ENCODE measurements at regions of chr15 and their contacts with region 1.

Region 1: DNA sequence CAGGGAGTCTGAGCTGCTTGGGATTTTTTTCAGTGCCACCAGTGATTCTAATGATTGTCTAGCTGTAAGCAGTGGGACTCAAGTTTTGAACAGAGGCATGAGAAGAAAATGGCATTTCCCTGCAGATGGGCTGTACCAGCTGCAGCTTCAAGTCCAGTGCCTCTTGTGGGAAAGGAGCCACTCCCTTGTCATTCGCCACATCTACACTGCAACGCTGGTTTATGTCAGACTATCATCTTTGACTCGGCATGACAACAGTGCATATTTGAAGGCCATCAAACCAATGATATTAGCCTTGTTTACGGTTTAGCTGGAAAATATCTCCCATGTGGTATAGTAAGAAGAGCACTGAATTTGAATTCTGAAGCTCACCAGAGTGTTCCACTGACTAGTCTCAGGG is 22.2 kb downstream of the SCG5 start:
- DNase-seq: no peak
- H3K4me3 ChIP-seq: no peak overlapping the region
- H3K27ac ChIP-seq: no peak overlapping the region
- H3K4me1 ChIP-seq: no peaks in the 10 kb centered on the region
- H3K27me3 ChIP-seq: no peaks in the 10 kb centered on the region
- CTCF ChIP-seq: no peak

Region 2: GRCh38 chr15:32781781-32782180 is 118.1 kb after region 1 on chr15:
- CTCF ChIA-PET with region 1: no interaction called
- POLR2A ChIA-PET with region 1: no interaction called
- intact Hi-C with region 1: no loop called
- DNase-seq: no peak
- H3K4me3 ChIP-seq: no peak overlapping the region
- H3K27ac ChIP-seq: no peak overlapping the region
- H3K4me1 ChIP-seq: no peaks in the 10 kb centered on the region
- H3K27me3 ChIP-seq: no peaks in the 10 kb centered on the region
- CTCF ChIP-seq: no peak

Region 3: DNA sequence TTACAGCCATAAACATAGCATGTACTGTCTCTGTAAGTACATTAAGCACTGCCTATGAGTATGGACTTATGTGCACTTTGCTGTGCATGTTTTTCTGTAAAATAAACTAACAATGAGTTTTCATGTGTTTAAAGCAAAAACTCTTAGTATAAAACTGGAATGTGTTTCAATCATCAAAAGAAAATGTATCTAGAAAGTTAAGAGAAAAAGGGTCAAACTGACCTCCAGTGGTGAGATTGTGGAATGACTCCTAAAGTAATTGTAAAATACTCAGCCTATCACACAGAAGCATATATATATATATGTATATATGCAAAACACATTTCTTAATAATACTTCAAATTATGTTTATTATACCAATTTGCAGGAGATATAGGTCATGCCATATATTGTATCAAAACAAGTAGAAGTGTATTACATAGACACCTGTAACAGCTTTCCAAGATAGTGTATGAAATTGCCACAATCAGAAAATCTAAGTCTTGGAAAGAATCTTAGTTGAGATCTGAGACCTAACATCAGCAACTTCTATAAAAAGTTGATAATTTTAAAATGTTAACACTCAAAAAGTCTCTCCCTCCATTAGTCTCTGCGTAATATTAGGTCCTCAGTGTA is 331.2 kb after region 1 on chr15:
- CTCF ChIA-PET with region 1: interaction called, 10 read pairs
- POLR2A ChIA-PET with region 1: no interaction called
- intact Hi-C with region 1: loop called (anchors 2 kb)
- DNase-seq: peak; percentile 36
- H3K4me3 ChIP-seq: no peak overlapping the region
- H3K27ac ChIP-seq: no peak overlapping the region
- H3K4me1 ChIP-seq: no peaks in the 10 kb centered on the region
- H3K27me3 ChIP-seq: peaks cover 9% of the 10 kb centered on the region
- CTCF ChIP-seq: peak; percentile 69

Region 4: DNA sequence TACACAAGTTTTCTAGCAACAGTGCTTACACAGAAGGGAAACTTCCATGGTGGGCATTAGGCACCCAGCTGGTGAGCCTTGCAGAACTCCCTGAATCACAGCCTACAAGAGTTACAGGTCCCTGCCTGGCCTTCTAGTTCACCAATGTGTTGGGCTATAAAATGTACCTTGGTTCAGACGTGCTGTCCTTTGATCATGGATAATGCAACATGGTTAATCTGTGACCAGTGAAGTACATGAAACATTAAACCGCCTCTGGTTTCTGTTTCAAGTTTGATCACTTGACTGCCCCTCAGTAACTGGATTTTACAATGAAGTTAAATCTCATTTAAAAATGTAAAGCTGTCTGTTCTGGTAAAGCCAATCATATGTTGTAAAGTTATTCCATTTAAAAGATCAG is 479.0 kb after region 1 on chr15:
- CTCF ChIA-PET with region 1: no interaction called
- POLR2A ChIA-PET with region 1: no interaction called
- intact Hi-C with region 1: no loop called
- DNase-seq: no peak
- H3K4me3 ChIP-seq: no peak overlapping the region
- H3K27ac ChIP-seq: no peak overlapping the region
- H3K4me1 ChIP-seq: no peaks in the 10 kb centered on the region
- H3K27me3 ChIP-seq: peaks cover 32% of the 10 kb centered on the region
- CTCF ChIP-seq: no peak

Measured in A673 (cell line).